ENCODE measurements at regions of chr2 and their contacts with region 1.

Region 1: GRCh38 chr2:80420530-80421208 is 116.1 kb upstream of the LRRTM1 start:
- DNase-seq: no peak
- ATAC-seq: no peak
- H3K4me3 ChIP-seq: no peak overlapping the region
- H3K27ac ChIP-seq: no peak overlapping the region
- H3K4me1 ChIP-seq: no peaks in the 10 kb centered on the region
- H3K27me3 ChIP-seq: no peaks in the 10 kb centered on the region
- CTCF ChIP-seq: no peak
- EP300 ChIP-seq: no peak
- POLR2A ChIP-seq: no peak
- RAD21 ChIP-seq: no peak

Region 2: DNA sequence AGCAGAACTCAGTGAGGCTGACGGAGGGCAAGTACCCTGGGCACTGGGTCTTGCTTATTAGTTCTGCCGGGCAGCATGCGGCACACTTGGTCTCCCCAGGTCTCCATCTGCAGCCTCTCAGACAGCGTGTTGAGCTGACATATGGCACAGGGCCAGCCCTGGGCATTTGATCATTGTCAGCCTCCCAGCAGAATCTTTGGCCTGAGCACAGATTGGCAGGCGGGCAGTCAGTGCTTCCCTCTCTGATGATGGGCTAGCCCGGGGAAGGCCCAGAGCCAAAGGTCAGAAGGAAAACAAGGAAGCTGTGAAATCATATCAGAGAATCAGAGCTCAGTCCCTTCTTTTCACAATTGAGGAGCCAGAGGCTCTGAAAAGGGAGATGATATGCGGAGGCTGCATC is 34.0 kb after region 1 on chr2:
- CTCF ChIA-PET with region 1: no interaction called
- POLR2A ChIA-PET with region 1: no interaction called
- in situ Hi-C with region 1: no loop called
- intact Hi-C with region 1: loop called (anchors 1 kb)
- DNase-seq: no peak
- ATAC-seq: no peak
- H3K4me3 ChIP-seq: no peak overlapping the region
- H3K27ac ChIP-seq: no peak overlapping the region
- H3K4me1 ChIP-seq: no peaks in the 10 kb centered on the region
- H3K27me3 ChIP-seq: no peaks in the 10 kb centered on the region; a peak in 1 of 5 replicates
- CTCF ChIP-seq: no peak
- EP300 ChIP-seq: no peak
- POLR2A ChIP-seq: no peak
- RAD21 ChIP-seq: no peak

Region 3: GRCh38 chr2:82098617-82099016 is 1677.9 kb after region 1 on chr2:
- CTCF ChIA-PET with region 1: no interaction called
- POLR2A ChIA-PET with region 1: no interaction called
- in situ Hi-C with region 1: no loop called
- intact Hi-C with region 1: loop called (anchors 5 kb)
- DNase-seq: no peak
- ATAC-seq: no peak
- H3K4me3 ChIP-seq: no peak overlapping the region
- H3K27ac ChIP-seq: no peak overlapping the region
- H3K4me1 ChIP-seq: no peaks in the 10 kb centered on the region
- H3K27me3 ChIP-seq: no peaks in the 10 kb centered on the region
- CTCF ChIP-seq: no peak
- EP300 ChIP-seq: no peak
- POLR2A ChIP-seq: no peak
- RAD21 ChIP-seq: no peak

Measured in HepG2 (cell line).